Caco-2 (cell line): ENCODE measurements at regions of chr13 and their contacts with region 1.

Region 1: GRCh38 chr13:23579072-23579895 is 9.1 kb downstream of the TNFRSF19 start:
- DNase-seq: peak; percentile 93 to 98
- H3K4me3 ChIP-seq: peak overlapping the region; percentile 95
- H3K4me3 Mint-ChIP-seq: peak overlapping the region; percentile 87
- H3K27ac Mint-ChIP-seq: peak overlapping the region; percentile 37
- H3K4me1 ChIP-seq: peaks cover 17% of the 10 kb centered on the region; the same call in 1 of the 2 replicates
- H3K4me1 Mint-ChIP-seq: peaks cover 20% of the 10 kb centered on the region
- H3K27me3 ChIP-seq: no peaks in the 10 kb centered on the region
- H3K27me3 Mint-ChIP-seq: no peaks in the 10 kb centered on the region
- CTCF ChIP-seq: no peak

Region 2: DNA sequence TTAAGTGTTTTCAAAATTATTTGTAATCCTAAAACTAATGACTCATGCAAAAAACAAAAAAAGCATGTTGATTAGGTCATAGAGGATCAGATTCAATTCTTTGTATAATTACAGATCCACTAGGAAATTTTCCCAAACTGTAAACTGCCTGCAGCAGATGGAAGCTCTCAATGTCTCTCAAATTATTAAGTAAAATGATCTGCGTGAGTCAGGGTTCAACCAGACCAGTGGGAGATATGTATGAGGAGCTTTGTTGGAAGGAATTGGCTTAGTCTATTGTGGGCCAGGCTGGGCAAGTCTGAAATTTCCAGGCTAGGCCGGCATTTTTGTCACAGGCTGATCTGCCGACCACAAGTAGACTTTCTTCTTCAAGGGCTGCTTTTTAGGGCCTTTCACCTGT is 131.4 kb before region 1 on chr13:
- CTCF ChIA-PET with region 1: no interaction called
- POLR2A ChIA-PET with region 1: no interaction called
- intact Hi-C with region 1: no loop called
- DNase-seq: no peak
- H3K4me3 ChIP-seq: no peak overlapping the region
- H3K4me3 Mint-ChIP-seq: no peak overlapping the region
- H3K27ac Mint-ChIP-seq: no peak overlapping the region
- H3K4me1 ChIP-seq: peaks cover 3% of the 10 kb centered on the region; the same call in 1 of the 2 replicates
- H3K4me1 Mint-ChIP-seq: peaks cover 13% of the 10 kb centered on the region
- H3K27me3 ChIP-seq: no peaks in the 10 kb centered on the region
- H3K27me3 Mint-ChIP-seq: no peaks in the 10 kb centered on the region
- CTCF ChIP-seq: no peak

Region 3: GRCh38 chr13:23599083-23599925 is 20.0 kb after region 1 on chr13:
- CTCF ChIA-PET with region 1: no interaction called
- POLR2A ChIA-PET with region 1: no interaction called
- intact Hi-C with region 1: loop called (anchors 1 kb)
- DNase-seq: peak; percentile 90 to 93
- H3K4me3 ChIP-seq: no peak overlapping the region
- H3K4me3 Mint-ChIP-seq: peak overlapping the region; percentile 42
- H3K27ac Mint-ChIP-seq: peak overlapping the region; percentile 94
- H3K4me1 ChIP-seq: peaks cover 35% of the 10 kb centered on the region
- H3K4me1 Mint-ChIP-seq: peaks cover 45% of the 10 kb centered on the region
- H3K27me3 ChIP-seq: no peaks in the 10 kb centered on the region
- H3K27me3 Mint-ChIP-seq: no peaks in the 10 kb centered on the region
- CTCF ChIP-seq: peak in 1 of 2 experiments; percentile 52

Region 4: GRCh38 chr13:23656637-23657371 is 77.5 kb after region 1 on chr13:
- CTCF ChIA-PET with region 1: interaction called, 7 read pairs
- POLR2A ChIA-PET with region 1: no interaction called
- intact Hi-C with region 1: loop called (anchors 5 kb)
- DNase-seq: peak; percentile 50 to 67
- H3K4me3 ChIP-seq: no peak overlapping the region
- H3K4me3 Mint-ChIP-seq: peak overlapping the region; percentile 12
- H3K27ac Mint-ChIP-seq: peak overlapping the region; percentile 67
- H3K4me1 ChIP-seq: peaks cover 49% of the 10 kb centered on the region
- H3K4me1 Mint-ChIP-seq: peaks cover 38% of the 10 kb centered on the region
- H3K27me3 ChIP-seq: no peaks in the 10 kb centered on the region
- H3K27me3 Mint-ChIP-seq: no peaks in the 10 kb centered on the region
- CTCF ChIP-seq: no peak

Region 5: DNA sequence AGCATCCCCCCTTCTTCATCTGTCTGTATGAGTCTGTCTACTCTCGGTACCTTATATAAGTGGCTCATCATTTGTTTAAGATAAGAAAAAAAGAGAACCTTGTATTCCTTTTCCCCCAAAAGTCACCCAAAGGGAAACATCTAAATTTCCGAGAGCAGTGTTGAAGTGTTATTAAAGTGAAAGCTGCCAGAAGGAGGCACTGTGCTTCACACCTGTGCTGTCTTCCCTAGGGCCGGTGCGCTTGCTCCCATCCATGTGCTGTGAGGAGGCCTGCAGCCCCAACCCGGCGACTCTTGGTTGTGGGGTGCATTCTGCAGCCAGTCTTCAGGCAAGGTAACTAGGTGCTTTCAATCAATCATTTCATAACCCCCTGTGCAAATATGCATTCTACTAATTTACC is 88.5 kb after region 1 on chr13:
- CTCF ChIA-PET with region 1: no interaction called
- POLR2A ChIA-PET with region 1: no interaction called
- intact Hi-C with region 1: no loop called
- DNase-seq: no peak
- H3K4me3 ChIP-seq: no peak overlapping the region
- H3K4me3 Mint-ChIP-seq: no peak overlapping the region
- H3K27ac Mint-ChIP-seq: no peak overlapping the region
- H3K4me1 ChIP-seq: no peaks in the 10 kb centered on the region
- H3K4me1 Mint-ChIP-seq: no peaks in the 10 kb centered on the region
- H3K27me3 ChIP-seq: no peaks in the 10 kb centered on the region
- H3K27me3 Mint-ChIP-seq: no peaks in the 10 kb centered on the region
- CTCF ChIP-seq: peak in 1 of 2 experiments; percentile 3

Region 6: DNA sequence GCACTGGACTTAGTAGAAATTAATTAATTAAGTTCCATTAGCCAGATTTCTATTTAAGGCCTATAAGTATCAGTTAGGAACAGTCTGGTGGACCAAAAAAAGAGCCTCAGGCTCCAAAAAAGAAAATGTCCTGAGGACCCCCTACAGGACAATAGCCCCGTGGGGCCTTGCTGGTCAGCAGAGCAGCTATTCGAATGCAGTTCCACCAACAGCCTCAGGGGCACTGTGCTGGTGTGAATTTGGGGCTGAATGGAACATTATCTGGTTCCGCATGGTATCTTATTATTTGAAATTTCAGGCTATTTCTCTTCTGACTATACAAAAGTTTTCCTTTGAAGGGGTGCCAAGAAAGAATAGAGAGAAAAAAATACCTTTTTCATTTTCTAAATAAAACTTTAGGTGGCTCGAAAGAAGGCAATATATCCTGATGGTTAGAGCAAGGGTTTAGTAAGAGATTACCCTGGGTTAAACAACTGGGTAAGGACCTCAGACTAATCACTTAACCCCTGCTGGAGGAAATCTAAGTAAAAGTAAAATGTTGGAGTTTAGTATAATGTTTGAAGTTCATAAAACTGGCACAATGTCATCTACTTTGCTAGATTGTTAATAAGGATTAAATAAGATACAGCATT is 162.7 kb after region 1 on chr13:
- CTCF ChIA-PET with region 1: interaction called, 5 read pairs
- POLR2A ChIA-PET with region 1: no interaction called
- intact Hi-C with region 1: loop called (anchors 2 kb)
- DNase-seq: peak; percentile 65 to 66
- H3K4me3 ChIP-seq: no peak overlapping the region
- H3K4me3 Mint-ChIP-seq: no peak overlapping the region
- H3K27ac Mint-ChIP-seq: peak overlapping the region; percentile 64
- H3K4me1 ChIP-seq: peaks cover 39% of the 10 kb centered on the region
- H3K4me1 Mint-ChIP-seq: peaks cover 46% of the 10 kb centered on the region
- H3K27me3 ChIP-seq: no peaks in the 10 kb centered on the region
- H3K27me3 Mint-ChIP-seq: no peaks in the 10 kb centered on the region
- CTCF ChIP-seq: peak; percentile 65 to 81

Region 7: DNA sequence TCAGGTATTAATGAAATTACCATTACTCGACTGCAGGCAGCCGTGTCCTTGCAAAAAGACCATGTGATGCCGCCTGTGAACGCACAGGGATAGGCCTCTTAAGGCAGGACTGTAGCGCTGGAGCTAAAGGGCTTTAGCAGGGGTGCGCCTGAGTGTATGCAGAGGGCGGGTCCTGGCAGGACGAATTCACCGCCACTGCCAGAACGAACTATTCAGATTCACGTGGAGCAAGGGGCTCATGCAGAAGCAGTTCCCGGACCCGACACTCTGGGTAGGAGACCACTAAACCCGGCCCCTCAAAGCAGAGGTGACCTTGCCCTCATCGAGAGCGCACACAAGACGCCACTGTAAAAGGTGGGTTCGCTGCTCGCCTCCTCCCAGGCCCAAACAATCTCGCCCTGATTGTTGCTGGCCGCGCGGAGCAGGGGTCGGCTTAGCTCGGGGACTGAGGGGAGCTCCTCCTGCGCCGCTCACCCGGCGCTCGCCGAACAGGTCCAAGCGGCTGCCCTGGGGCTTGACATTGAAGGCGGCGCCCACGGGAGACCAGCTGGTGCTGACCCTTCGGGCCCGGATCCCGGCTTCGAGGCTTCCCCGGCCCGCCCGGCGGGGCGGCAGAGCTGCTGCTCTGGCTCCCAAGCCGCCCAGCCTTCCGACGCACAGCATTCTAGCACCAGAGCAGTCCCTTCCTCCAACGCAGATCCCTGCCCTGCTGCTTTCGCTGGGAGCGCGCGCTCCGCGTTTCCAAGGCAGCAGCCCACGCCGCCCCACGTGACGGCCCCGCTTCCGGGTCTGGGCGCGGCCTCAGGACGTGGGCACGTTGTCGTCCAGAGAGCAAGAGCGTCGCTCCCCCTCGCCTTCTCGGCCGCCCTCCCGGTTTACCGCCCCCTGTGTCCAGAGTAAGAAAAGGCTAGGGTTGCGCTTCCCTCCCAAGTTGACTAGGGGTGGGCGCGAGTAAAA is 309.7 kb after region 1 on chr13 and contains the start of gene MIPEP:
- CTCF ChIA-PET with region 1: interaction called, 10 read pairs
- POLR2A ChIA-PET with region 1: interaction called, 8 read pairs
- intact Hi-C with region 1: loop called (anchors 5 kb)
- DNase-seq: peak; percentile 94 to 96
- H3K4me3 ChIP-seq: peak within 1 kb of the TSS; percentile 90
- H3K4me3 Mint-ChIP-seq: peak within 1 kb of the TSS; percentile 97
- H3K27ac Mint-ChIP-seq: peak within 1 kb of the TSS; percentile 88
- H3K4me1 ChIP-seq: 0 out of 2 replicates have a peak, but pooled peaks cover 9% of the 10 kb centered on the region
- H3K4me1 Mint-ChIP-seq: peaks cover 7% of the 10 kb centered on the region
- H3K27me3 ChIP-seq: no peaks in the 10 kb centered on the region
- H3K27me3 Mint-ChIP-seq: no peaks in the 10 kb centered on the region
- CTCF ChIP-seq: peak; percentile 71 to 87
- total RNA-seq, gene MIPEP: 40.6 and 40.8 TPM in 2 replicates